ENCODE measurements at regions of chr4 and their contacts with region 1.

Region 1: GRCh38 chr4:20684852-20685763 is 15.2 kb upstream of the PACRGL start:
- DNase-seq: no peak
- H3K4me3 ChIP-seq: no peak overlapping the region
- H3K27ac ChIP-seq: no peak overlapping the region
- H3K4me1 ChIP-seq: no peaks in the 10 kb centered on the region
- H3K27me3 ChIP-seq: peaks cover 2% of the 10 kb centered on the region
- CTCF ChIP-seq: peak; percentile 49 to 76 (median 67)
- POLR2A ChIP-seq: no peak

Region 2: GRCh38 chr4:20418861-20419451 is 266.2 kb before region 1 on chr4:
- intact Hi-C with region 1: loop called (anchors 1 kb)
- DNase-seq: peak; percentile 7
- H3K4me3 ChIP-seq: peak overlapping the region in 1 of 2 donors; percentile 7
- H3K27ac ChIP-seq: no peak overlapping the region
- H3K4me1 ChIP-seq: no peaks in the 10 kb centered on the region
- H3K27me3 ChIP-seq: no peaks in the 10 kb centered on the region
- CTCF ChIP-seq: peak in 3 of 4 experiments; percentile 43 to 69 (median 57)
- POLR2A ChIP-seq: no peak

Region 3: DNA sequence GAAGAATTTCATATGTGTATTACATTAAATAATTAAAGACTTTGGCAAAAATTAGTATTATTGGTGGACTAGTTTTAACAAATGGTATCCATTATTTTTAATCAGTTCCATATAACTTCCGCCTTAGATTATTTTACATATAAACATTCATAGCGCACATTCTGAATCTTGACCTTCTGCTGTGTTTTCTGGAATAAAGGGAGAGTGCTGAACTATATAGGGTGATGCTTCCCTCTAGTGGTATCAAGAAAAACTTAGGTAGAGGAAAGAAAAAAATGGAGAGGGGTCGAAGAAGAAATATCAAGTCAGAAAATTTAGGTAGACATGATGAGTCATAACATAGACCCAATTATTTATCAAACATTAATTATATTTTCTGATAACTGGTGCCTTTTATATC is 140.5 kb before region 1 on chr4:
- intact Hi-C with region 1: loop called (anchors 10 kb)
- DNase-seq: no peak
- H3K4me3 ChIP-seq: no peak overlapping the region
- H3K27ac ChIP-seq: no peak overlapping the region
- H3K4me1 ChIP-seq: no peaks in the 10 kb centered on the region
- H3K27me3 ChIP-seq: no peaks in the 10 kb centered on the region
- CTCF ChIP-seq: peak in 3 of 4 experiments; percentile 40 to 73 (median 67)
- POLR2A ChIP-seq: no peak

Region 4: GRCh38 chr4:20629186-20630115 is 55.7 kb before region 1 on chr4:
- intact Hi-C with region 1: no loop called
- DNase-seq: no peak
- H3K4me3 ChIP-seq: no peak overlapping the region
- H3K27ac ChIP-seq: no peak overlapping the region
- H3K4me1 ChIP-seq: no peaks in the 10 kb centered on the region
- H3K27me3 ChIP-seq: no peaks in the 10 kb centered on the region
- CTCF ChIP-seq: no peak
- POLR2A ChIP-seq: no peak

Region 5: DNA sequence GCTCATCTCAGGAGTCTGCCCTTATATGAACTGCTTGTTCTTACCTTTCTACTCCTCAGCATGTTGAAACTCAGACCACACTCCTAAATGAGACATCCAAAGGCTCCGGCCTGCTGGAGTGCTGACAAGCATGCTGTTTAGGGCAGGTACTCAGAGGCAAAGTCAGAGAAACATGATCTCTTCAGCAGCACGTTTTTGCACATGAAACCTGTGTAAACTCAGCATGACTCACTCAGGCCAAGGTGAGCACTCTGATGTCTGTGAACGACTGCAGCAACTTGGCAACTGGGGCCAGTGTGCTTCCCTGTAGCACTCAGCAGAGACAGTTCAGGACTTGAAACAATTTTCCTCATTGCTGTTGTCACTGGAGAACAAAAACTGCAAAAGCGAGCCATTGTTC is 124.7 kb after region 1 on chr4:
- intact Hi-C with region 1: no loop called
- DNase-seq: peak; percentile 81
- H3K4me3 ChIP-seq: no peak overlapping the region
- H3K27ac ChIP-seq: no peak overlapping the region
- H3K4me1 ChIP-seq: no peaks in the 10 kb centered on the region
- H3K27me3 ChIP-seq: no peaks in the 10 kb centered on the region
- CTCF ChIP-seq: no peak
- POLR2A ChIP-seq: no peak